ENCODE measurements at regions of chr12 and their contacts with region 1.

Region 1: GRCh38 chr12:76348079-76348901 is at the start of gene BBS10:
- DNase-seq: peak; percentile 92
- ATAC-seq: peak; percentile 90
- H3K4me3 ChIP-seq: peak within 1 kb of the TSS; percentile 92
- H3K27ac ChIP-seq: peak within 1 kb of the TSS; percentile 60
- H3K4me1 ChIP-seq: peaks cover 21% of the 10 kb centered on the region
- H3K27me3 ChIP-seq: no peaks in the 10 kb centered on the region
- CTCF ChIP-seq: peak; percentile 67
- total RNA-seq, gene BBS10: 7.5 and 8.0 TPM in 2 replicates

Region 2: DNA sequence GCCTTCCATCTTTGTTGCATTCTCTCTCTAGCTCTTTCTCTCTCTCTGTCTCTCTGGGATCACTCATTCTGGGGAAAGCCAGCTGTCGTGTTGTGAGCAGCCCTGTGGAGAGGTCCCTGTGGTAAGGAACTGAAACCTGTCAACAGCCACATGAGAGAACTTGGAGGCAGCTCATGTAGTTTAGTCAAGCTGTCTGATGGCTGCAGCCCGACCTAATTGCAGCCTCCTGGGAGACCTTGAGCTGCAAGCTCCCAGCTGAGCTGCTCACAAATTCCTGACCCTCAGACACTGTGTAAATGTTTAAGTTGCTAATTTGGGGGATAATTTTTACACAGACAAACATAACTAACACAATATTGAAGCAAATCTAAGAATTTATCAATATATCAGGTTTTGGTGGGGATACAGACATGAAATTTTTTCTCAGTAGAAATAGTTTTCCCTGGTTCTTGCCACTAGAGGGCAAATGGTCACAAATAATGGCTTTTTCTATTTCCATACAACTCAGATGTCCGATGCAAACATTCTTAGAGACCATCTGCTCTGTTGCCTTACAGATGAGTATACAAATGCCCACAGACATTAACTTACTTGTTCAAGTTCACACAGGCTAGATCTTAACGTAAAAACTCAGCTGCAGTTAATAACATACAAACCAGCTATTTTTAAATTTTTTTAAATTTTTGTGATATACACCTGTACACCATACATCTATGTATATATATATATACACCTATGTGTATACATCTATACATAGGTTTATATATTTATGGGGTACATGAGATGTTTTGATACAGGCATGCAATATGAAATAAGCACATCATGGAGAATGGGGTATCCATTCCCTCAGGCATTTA is 821.4 kb before region 1 on chr12:
- CTCF ChIA-PET with region 1: interaction called, 3 read pairs
- POLR2A ChIA-PET with region 1: no interaction called
- intact Hi-C with region 1: loop called (anchors 2 kb)
- DNase-seq: peak; percentile 75
- ATAC-seq: peak; percentile 76
- H3K4me3 ChIP-seq: no peak overlapping the region
- H3K27ac ChIP-seq: no peak overlapping the region
- H3K4me1 ChIP-seq: no peaks in the 10 kb centered on the region; the same call in 1 of the 2 replicates
- H3K27me3 ChIP-seq: no peaks in the 10 kb centered on the region
- CTCF ChIP-seq: peak; percentile 87

Region 3: GRCh38 chr12:76083904-76084862 is 264.1 kb before region 1 on chr12 and contains the start of gene NAP1L1:
- CTCF ChIA-PET with region 1: no interaction called
- POLR2A ChIA-PET with region 1: no interaction called
- intact Hi-C with region 1: loop called (anchors 1 kb)
- DNase-seq: peak; percentile 98
- ATAC-seq: peak; percentile 89
- H3K4me3 ChIP-seq: peak within 1 kb of the TSS; percentile 93
- H3K27ac ChIP-seq: peak within 1 kb of the TSS; percentile 76
- H3K4me1 ChIP-seq: peaks cover 31% of the 10 kb centered on the region
- H3K27me3 ChIP-seq: no peaks in the 10 kb centered on the region
- CTCF ChIP-seq: no peak
- total RNA-seq, gene NAP1L1: 200 and 247 TPM in 2 replicates

Region 4: GRCh38 chr12:76360316-76360715 is 12.0 kb after region 1 on chr12:
- CTCF ChIA-PET with region 1: no interaction called
- POLR2A ChIA-PET with region 1: no interaction called
- intact Hi-C with region 1: no loop called
- DNase-seq: no peak
- ATAC-seq: no peak
- H3K4me3 ChIP-seq: no peak overlapping the region
- H3K27ac ChIP-seq: no peak overlapping the region
- H3K4me1 ChIP-seq: no peaks in the 10 kb centered on the region
- H3K27me3 ChIP-seq: no peaks in the 10 kb centered on the region
- CTCF ChIP-seq: no peak

Region 5: DNA sequence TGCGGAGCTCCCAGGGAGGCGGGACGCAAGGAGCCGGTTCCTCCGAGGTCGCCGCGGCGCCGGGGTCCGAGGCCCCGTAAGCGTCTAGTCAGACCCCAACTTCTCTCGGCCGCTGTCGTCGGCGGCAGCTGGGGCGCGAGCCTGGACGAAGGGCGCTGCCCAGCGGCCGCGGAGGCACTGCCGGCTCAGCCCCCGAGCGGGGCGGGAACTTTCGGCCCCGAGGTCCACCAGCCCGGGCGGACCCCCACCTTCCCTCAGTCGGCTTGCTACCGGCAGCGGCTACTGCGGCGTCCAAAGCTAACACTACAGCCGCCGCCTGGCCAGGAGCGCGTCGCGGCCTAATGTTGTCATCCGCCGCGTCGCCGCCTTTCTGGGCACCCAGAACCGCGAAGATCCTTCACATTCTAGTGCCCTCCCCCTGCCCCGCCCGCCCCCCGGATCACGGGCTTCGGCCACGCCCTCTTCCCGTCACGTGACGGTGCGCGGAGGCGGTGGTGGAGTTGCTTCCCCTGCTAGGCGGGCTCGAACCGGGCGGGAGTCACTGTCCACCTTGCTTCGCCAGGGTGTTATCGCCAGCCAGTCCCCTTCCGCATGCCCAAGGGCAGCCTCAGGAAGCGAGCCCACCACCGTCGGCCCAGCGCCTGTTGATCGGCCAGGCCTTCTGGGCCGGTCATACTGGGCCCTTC is 211.3 kb after region 1 on chr12 and contains the start of gene OSBPL8:
- CTCF ChIA-PET with region 1: no interaction called
- POLR2A ChIA-PET with region 1: no interaction called
- intact Hi-C with region 1: loop called (anchors 10 kb)
- DNase-seq: peak; percentile 93
- ATAC-seq: peak; percentile 76
- H3K4me3 ChIP-seq: peak within 1 kb of the TSS; percentile 100
- H3K27ac ChIP-seq: peak within 1 kb of the TSS; percentile 29
- H3K4me1 ChIP-seq: peaks cover 42% of the 10 kb centered on the region
- H3K27me3 ChIP-seq: no peaks in the 10 kb centered on the region
- CTCF ChIP-seq: no peak; the same call in 1 of the 2 replicates
- total RNA-seq, gene OSBPL8: 28.5 and 42.6 TPM in 2 replicates